GM13976 (cell line): ENCODE measurements at regions of chr4 and their contacts with region 1.

Region 1: DNA sequence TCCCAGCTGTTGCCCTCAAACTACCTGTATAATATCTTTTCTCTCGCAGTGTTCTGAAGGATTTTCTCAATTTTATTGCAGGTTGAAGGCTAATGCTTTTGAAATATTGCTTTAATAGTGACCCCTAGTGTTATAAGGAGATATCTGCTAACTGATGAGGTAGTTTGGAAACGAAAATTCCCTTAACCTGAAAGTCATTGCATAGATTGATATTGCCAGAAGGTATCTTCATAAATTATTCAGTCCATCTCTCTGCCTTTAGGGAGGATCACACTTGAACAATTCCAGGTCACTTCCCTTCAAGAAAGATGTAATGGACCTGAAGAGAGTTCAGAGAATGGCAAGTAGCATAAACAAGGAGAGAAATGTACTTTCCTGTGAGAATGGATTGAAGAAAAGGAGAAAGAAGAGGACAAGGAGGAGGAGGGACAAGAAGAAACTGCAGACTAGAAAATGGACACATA is 44.1 kb downstream of the TIGD4 start:
- DNase-seq: peak; percentile 52
- CTCF ChIP-seq: peak; percentile 40

Region 2: GRCh38 chr4:152640058-152640833 is 95.2 kb before region 1 on chr4:
- in situ Hi-C with region 1: loop called (anchors 10 kb)
- DNase-seq: no peak
- CTCF ChIP-seq: peak; percentile 20

Region 3: DNA sequence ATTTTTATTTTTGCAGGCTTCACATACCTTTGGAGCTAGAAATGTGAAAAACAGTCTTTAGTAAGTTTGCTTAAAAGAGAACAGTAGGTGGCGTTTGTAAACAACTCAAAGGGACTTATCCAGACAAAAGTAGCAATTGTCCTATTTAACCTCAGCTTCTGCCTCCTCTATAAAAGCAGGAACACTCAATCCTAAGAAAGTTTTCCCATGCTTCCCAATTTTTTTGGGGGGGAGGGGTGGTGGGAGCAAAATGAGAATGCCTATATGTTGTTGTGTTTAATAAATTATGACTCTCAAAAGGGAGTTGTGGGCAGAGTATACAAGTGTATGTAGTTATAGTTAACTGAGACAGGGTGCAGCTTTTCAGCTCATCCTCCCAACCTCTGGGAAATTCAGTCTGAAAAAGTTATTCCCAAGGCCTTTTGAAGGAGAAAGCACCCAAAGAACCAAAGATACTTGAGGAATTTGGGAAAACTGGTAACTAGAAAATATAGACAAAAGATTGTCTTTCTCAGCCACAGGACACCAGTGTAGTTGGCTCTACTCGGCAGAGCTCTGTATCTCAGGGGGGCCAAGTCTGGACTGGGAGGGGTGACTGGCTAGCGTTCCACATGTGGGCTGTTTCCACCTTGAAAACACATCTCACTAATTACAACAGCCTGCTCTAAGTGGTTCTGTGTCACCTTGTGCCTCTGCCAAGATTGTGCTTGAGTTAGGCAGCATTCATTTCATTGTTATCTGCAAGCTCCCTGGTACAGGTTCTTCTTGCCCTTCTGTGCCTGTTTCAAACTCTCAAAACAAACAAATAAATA is 1050.7 kb after region 1 on chr4:
- in situ Hi-C with region 1: no loop called
- DNase-seq: peak; percentile 44
- CTCF ChIP-seq: peak; percentile 16